ENCODE measurements at regions of chr10 and their contacts with region 1.

Region 1: DNA sequence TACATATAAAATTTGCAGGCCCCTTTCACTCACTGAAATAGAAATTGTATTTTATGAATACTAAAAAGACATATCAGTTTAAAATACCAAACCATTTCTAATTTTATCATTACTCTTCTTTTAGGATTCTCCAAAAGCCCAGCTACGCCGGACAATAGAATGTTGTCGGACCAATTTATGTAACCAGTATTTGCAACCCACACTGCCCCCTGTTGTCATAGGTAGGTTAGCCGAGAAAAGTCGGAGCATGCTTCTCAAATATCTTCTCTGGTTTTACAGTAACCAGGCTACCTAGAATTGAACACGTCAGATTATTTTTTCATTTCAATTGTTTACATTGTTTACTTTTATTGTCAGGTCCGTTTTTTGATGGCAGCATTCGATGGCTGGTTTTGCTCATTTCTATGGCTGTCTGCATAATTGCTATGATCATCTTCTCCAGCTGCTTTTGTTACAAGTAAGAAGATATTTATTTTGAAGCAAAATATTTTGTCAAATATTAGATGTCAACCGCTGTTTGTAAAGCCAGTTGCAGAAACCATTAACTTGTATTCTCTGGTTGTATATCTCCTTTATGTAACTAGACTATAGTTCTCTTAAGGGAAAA is 57.6 kb downstream of the MMRN2 start:
- DNase-seq: peak; percentile 59
- H3K4me3 Mint-ChIP-seq: no peak overlapping the region
- H3K27ac Mint-ChIP-seq: no peak overlapping the region
- H3K4me1 Mint-ChIP-seq: no peaks in the 10 kb centered on the region
- H3K27me3 Mint-ChIP-seq: no peaks in the 10 kb centered on the region

Region 2: GRCh38 chr10:86688398-86688921 is 211.3 kb before region 1 on chr10:
- CTCF ChIA-PET with region 1: interaction called, 45 read pairs
- DNase-seq: peak; percentile 62
- H3K4me3 Mint-ChIP-seq: no peak overlapping the region
- H3K27ac Mint-ChIP-seq: no peak overlapping the region
- H3K4me1 Mint-ChIP-seq: peaks cover 5% of the 10 kb centered on the region
- H3K27me3 Mint-ChIP-seq: peaks cover 25% of the 10 kb centered on the region

Region 3: DNA sequence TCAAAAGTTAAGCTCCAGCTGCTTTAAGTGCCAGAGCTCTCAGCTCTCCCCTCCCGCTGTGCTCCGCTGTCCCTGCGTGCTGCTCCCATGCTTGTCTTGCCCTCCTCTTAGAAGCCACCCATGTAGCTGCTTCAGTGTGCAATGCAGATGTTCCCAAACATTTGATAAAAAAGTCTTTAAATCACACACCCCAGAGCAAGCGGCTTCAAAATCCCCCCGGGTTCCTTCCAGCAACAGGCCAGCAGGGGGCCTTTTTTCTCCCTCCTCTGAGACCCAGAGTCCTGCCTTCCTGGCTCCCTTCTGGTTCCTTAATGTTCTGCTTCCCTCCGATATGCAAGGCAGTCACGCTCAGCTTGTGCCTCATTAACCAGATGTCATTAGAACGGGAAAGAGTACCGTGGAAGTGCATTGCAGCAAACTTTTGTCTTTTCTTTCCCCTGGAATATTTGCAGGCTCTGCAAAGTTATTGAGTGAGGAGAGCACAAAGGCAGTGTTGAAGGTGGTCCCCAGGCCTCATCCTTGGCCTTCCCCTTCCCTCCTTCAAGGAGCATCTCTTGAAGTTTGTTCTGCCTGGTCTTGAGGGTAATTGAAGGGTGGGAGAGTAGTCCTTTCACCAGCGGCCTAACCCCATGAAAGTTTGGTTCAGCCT is 205.9 kb before region 1 on chr10:
- CTCF ChIA-PET with region 1: interaction called, 45 read pairs
- DNase-seq: peak; percentile 57
- H3K4me3 Mint-ChIP-seq: no peak overlapping the region
- H3K27ac Mint-ChIP-seq: no peak overlapping the region
- H3K4me1 Mint-ChIP-seq: no peaks in the 10 kb centered on the region
- H3K27me3 Mint-ChIP-seq: peaks cover 39% of the 10 kb centered on the region

Region 4: GRCh38 chr10:86868353-86868752 is 31.4 kb before region 1 on chr10:
- CTCF ChIA-PET with region 1: no interaction called
- DNase-seq: no peak
- H3K4me3 Mint-ChIP-seq: no peak overlapping the region
- H3K27ac Mint-ChIP-seq: no peak overlapping the region
- H3K4me1 Mint-ChIP-seq: no peaks in the 10 kb centered on the region
- H3K27me3 Mint-ChIP-seq: no peaks in the 10 kb centered on the region

Measured in activated naive CD4-positive, alpha-beta T cell treated with anti-CD3 and anti-CD28 coated beads, Interleukin-2, amount 10 ng/mL, durations not matched to agents 7 days and 5 days (primary cell).